ENCODE measurements at regions of chr2 and their contacts with region 1.

Region 1: DNA sequence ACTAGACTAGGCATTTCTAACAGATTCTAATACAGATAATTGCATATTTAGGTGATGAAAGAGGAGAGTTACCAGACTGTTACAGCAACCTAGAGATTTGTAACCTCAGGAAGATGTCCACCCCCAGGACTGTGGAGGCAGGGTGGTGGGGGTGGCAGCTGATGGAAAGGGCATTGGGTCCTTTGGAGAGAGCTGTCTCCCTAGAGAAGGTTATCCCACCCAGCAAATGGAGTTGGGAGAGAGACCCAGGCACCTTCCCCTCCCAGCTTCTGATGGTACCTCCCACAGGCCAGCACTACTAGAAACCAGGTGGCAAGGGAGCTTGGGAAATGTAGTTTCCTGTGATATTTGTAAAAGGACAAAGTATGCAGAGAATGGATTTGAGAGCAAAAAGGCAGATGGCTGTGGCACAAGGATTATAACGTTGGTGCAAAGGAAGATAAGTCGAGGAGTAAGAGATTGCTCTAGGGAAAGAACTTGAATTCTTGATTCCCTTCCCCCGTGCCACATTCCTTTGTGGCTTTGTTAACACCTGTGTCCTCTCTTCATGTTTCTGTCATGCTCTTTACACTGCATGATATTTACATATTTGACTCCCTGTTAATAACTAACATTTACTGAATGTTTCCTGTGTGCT is 75.5 kb upstream of the MGAT5 start:
- DNase-seq: no peak
- ATAC-seq: no peak

Region 2: GRCh38 chr2:134137182-134137611 is 41.2 kb before region 1 on chr2:
- intact Hi-C with region 1: loop called (anchors 5 kb)
- DNase-seq: no peak
- ATAC-seq: peak; percentile 51

Region 3: DNA sequence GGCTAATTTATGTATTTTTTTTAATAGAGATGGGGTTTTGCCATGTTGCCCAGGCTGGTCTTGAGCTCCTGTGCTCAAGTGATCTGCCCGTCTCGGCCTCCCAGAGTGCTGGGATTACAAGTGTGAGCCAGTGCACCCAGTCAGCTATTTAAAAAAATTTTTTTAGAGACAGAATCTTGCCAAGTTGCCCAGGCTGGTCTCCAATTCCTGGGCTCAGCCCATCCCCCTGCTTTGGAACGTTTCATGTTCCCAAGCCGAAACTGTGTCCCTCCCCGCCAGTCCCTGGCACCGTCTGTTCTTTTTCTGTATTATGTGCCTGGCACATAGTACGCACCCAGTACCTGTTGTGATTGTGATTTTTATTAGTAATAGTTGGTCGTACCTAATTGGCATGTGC is 12.4 kb after region 1 on chr2:
- intact Hi-C with region 1: loop called (anchors 2 kb)
- DNase-seq: peak; percentile 72
- ATAC-seq: peak; percentile 87

Region 4: GRCh38 chr2:134245340-134245984 is 67.1 kb after region 1 on chr2:
- intact Hi-C with region 1: loop called (anchors 5 kb)
- DNase-seq: peak; percentile 79
- ATAC-seq: peak; percentile 43